ENCODE measurements at regions of chr9 and their contacts with region 1.

Region 1: DNA sequence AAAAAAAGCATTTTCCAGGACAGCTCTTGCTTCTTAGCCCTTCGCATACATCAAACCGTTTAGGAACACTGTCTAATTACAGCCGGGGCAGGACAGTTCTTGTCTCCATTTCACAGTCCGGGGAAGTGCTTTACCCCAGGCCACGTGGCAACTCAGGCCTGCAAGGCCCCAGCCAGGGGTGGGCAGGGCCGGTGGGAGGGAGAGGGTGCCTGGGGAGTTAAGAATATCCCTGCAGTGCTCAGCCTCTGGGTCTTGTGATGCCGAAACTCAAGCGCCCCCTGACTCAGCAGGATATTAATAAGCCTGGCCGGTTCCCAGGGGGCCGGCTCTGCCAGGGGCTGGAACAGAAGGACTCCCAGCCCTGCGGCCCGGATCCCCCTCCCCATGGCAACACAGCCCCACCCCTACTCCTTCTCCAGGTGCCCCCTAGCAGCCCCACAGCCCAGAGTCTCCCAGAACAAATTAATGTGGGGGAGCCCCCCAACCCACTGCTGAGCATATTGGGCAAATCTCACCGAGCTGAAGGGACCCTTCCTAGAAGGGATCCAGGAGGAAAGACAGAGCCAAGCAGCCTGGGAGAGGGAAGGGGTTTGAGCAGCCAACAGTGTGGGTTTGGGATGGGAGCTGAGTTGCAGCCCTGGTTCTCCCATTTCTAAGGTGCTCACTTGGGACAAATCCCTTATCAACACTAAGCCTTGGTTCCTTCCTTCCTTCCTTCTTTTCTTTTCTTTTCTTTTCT is 45.3 kb downstream of the PLPP7 start:
- DNase-seq: peak in 1 of 3 donors; percentile 22
- ATAC-seq: no peak
- H3K4me3 ChIP-seq: no peak overlapping the region
- H3K4me1 ChIP-seq: no peaks in the 10 kb centered on the region
- CTCF ChIP-seq: no peak

Region 2: DNA sequence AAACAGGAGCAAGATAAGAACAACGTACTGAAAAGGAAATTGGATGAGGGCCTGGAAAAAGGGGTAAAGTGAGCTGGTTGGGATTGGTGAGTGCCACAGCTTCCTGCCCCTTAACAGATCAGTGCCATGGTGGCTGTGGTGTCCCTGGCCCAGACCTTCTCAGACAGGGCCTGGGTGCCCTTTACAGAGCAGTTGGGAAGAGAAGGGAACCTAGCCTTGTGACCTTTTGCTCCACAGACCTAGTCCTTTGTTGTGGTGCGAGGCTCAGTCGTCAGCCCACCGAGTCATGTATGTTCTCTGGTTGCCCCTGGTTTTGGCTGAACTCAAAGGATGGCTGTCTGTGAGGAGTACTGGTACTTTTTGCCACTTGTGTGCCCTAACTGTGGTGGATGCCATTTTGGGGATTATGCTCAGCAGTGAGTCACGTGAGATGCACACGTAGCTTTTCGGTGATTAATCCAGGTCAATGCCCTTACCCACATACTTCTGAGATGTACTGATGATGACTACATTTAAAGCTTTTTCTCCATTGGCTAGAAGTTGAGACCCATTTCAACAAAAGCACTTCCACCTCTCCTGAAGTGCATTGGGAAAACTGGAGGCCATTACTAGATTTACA is 592.9 kb before region 1 on chr9:
- intact Hi-C with region 1: no loop called
- DNase-seq: no peak
- ATAC-seq: no peak
- H3K4me3 ChIP-seq: no peak overlapping the region
- H3K4me1 ChIP-seq: no peaks in the 10 kb centered on the region
- CTCF ChIP-seq: no peak

Region 3: GRCh38 chr9:131056781-131057506 is 277.9 kb before region 1 on chr9:
- intact Hi-C with region 1: loop called in 1 of 2 experiments (anchors 5 kb)
- DNase-seq: peak in 1 of 3 donors; percentile 39
- ATAC-seq: peak; percentile 43
- H3K4me3 ChIP-seq: no peak overlapping the region
- H3K4me1 ChIP-seq: no peaks in the 10 kb centered on the region
- CTCF ChIP-seq: no peak

Region 4: DNA sequence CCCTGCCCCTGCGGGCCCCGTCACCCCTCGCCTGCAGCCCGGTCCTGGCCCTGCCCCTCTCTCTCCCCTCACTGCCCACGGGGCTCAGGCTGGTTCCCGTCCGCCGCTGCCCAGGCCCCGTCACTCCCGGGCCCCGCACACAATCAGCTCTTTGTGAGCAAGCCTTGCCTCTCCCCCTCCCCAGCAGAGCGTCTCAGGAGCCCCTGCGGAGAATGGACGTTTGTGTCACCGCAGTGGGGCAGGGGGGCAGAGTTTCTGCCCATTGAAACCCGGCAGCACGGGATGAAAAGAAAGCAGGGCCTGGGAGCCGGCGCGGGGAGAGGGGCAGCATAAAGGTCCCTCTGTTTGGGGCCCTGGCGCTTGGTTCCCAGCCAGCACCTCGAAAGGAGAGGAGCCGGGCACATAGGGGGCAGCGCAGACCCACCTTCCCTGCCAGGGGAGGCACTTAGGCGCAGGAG is 222.9 kb before region 1 on chr9:
- intact Hi-C with region 1: no loop called
- DNase-seq: no peak
- ATAC-seq: no peak
- H3K4me3 ChIP-seq: no peak overlapping the region
- H3K4me1 ChIP-seq: no peaks in the 10 kb centered on the region
- CTCF ChIP-seq: no peak

Region 5: GRCh38 chr9:131178382-131178781 is 156.4 kb before region 1 on chr9:
- intact Hi-C with region 1: loop called (anchors 5 kb)
- DNase-seq: peak; percentile 60 to 80 (median 79)
- ATAC-seq: peak; percentile 97
- H3K4me3 ChIP-seq: no peak overlapping the region
- H3K4me1 ChIP-seq: no peaks in the 10 kb centered on the region
- CTCF ChIP-seq: peak; percentile 85

Region 6: DNA sequence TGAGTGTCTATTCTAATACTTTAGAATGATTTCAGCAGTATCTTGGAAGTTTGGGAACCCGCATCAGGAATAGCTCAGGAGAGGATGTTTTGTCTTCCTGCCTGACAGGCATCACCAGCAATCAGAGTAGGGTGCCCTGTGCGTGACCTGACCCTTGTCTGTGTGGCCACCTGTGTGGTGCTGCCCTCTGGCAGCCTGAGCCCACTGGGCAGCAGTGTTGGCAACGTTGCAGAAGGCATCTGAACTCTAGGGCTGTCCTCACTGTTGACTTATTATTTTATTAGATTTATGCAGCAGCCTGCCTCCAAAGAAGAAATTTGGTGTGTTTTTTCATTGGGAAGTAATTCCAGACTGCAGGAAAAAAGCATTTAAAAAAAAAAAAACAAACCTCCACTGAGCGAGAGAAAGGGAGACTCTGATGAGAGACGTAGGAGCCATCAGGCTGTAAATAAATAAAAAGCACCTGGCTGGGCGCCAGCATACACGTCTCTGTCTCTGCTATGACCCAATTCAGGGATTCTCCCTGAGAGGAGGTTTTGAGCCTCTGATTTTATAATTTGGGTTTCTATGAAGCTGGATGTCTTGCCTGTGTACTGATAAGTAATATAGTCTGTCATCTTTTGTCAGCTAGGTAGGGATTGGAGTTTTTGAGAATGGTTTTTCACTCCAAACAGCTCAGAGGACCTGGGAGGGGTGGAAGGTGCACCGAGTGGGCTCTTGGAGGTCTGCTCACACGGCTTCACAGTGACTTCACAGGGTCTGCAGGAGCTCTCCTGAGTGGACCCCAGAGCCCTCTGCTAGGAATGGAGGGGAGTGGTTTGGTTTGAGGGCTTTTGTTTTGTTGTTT is 107.5 kb before region 1 on chr9:
- intact Hi-C with region 1: no loop called
- DNase-seq: peak in 1 of 3 donors; percentile 37
- ATAC-seq: no peak
- H3K4me3 ChIP-seq: no peak overlapping the region
- H3K4me1 ChIP-seq: no peaks in the 10 kb centered on the region
- CTCF ChIP-seq: no peak

Region 7: GRCh38 chr9:131447148-131447547 is 112.3 kb after region 1 on chr9:
- intact Hi-C with region 1: no loop called
- DNase-seq: no peak
- ATAC-seq: no peak
- H3K4me3 ChIP-seq: no peak overlapping the region
- H3K4me1 ChIP-seq: no peaks in the 10 kb centered on the region
- CTCF ChIP-seq: no peak

Measured in mucosa of descending colon (tissue), 3 donors.